ENCODE measurements at regions of chr5 and their contacts with region 1.

Region 1: GRCh38 chr5:81301271-81302015 is at the start of gene ZCCHC9:
- DNase-seq: peak; percentile 79
- ATAC-seq: peak; percentile 92
- H3K4me3 ChIP-seq: peak within 1 kb of the TSS; percentile 76
- H3K27ac ChIP-seq: peak within 1 kb of the TSS; percentile 77
- H3K4me1 ChIP-seq: peaks cover 8% of the 10 kb centered on the region
- H3K27me3 ChIP-seq: no peaks in the 10 kb centered on the region
- CTCF ChIP-seq: peak; percentile 2 to 21 (median 12); a peak in 1 of 6 replicates
- EP300 ChIP-seq: peak; percentile 48 to 52; a peak in 2 of 4 replicates
- POLR2A ChIP-seq: peak; percentile 98
- RAD21 ChIP-seq: no peak; the same call in 1 of the 2 replicates
- polyA plus RNA-seq, gene ZCCHC9: 47.5 to 57.7 TPM

Region 2: GRCh38 chr5:80686757-80687156 is 614.7 kb before region 1 on chr5:
- CTCF ChIA-PET with region 1: interaction called, 11 read pairs
- POLR2A ChIA-PET with region 1: no interaction called
- RAD21 ChIA-PET with region 1: no interaction called
- SMC1A ChIA-PET with region 1: no interaction called
- in situ Hi-C with region 1: no loop called
- intact Hi-C with region 1: loop called (anchors 5 kb)
- DNase-seq: no peak
- ATAC-seq: no peak
- H3K4me3 ChIP-seq: no peak overlapping the region
- H3K27ac ChIP-seq: no peak overlapping the region
- H3K4me1 ChIP-seq: no peaks in the 10 kb centered on the region
- H3K27me3 ChIP-seq: no peaks in the 10 kb centered on the region
- CTCF ChIP-seq: no peak; a peak in 1 of 6 replicates
- EP300 ChIP-seq: no peak
- POLR2A ChIP-seq: no peak
- RAD21 ChIP-seq: peak; percentile 40

Region 3: GRCh38 chr5:81070571-81071255 is 230.7 kb before region 1 on chr5:
- CTCF ChIA-PET with region 1: no interaction called
- POLR2A ChIA-PET with region 1: no interaction called
- RAD21 ChIA-PET with region 1: no interaction called
- SMC1A ChIA-PET with region 1: no interaction called
- in situ Hi-C with region 1: no loop called
- intact Hi-C with region 1: no loop called
- DNase-seq: no peak
- ATAC-seq: no peak
- H3K4me3 ChIP-seq: no peak overlapping the region
- H3K27ac ChIP-seq: no peak overlapping the region
- H3K4me1 ChIP-seq: no peaks in the 10 kb centered on the region
- H3K27me3 ChIP-seq: no peaks in the 10 kb centered on the region
- CTCF ChIP-seq: no peak
- EP300 ChIP-seq: no peak
- POLR2A ChIP-seq: no peak
- RAD21 ChIP-seq: no peak

Region 4: GRCh38 chr5:81207009-81207408 is 94.4 kb before region 1 on chr5:
- CTCF ChIA-PET with region 1: interaction called, 31 read pairs
- POLR2A ChIA-PET with region 1: interaction called, 4 read pairs
- RAD21 ChIA-PET with region 1: interaction called, 6 read pairs
- SMC1A ChIA-PET with region 1: interaction called, 11 read pairs
- in situ Hi-C with region 1: no loop called
- intact Hi-C with region 1: no loop called
- DNase-seq: no peak
- ATAC-seq: peak; percentile 53
- H3K4me3 ChIP-seq: no peak overlapping the region
- H3K27ac ChIP-seq: no peak overlapping the region
- H3K4me1 ChIP-seq: no peaks in the 10 kb centered on the region
- H3K27me3 ChIP-seq: no peaks in the 10 kb centered on the region
- CTCF ChIP-seq: peak; percentile 31 to 44 (median 38)
- EP300 ChIP-seq: no peak
- POLR2A ChIP-seq: no peak
- RAD21 ChIP-seq: peak; percentile 13; the same call in 1 of the 2 replicates

Region 5: GRCh38 chr5:81232464-81233079 is 68.9 kb before region 1 on chr5:
- CTCF ChIA-PET with region 1: interaction called, 11 read pairs
- POLR2A ChIA-PET with region 1: no interaction called
- RAD21 ChIA-PET with region 1: no interaction called
- SMC1A ChIA-PET with region 1: no interaction called
- in situ Hi-C with region 1: no loop called
- intact Hi-C with region 1: no loop called
- DNase-seq: no peak
- ATAC-seq: no peak
- H3K4me3 ChIP-seq: no peak overlapping the region
- H3K27ac ChIP-seq: no peak overlapping the region
- H3K4me1 ChIP-seq: no peaks in the 10 kb centered on the region
- H3K27me3 ChIP-seq: no peaks in the 10 kb centered on the region
- CTCF ChIP-seq: no peak
- EP300 ChIP-seq: no peak
- POLR2A ChIP-seq: no peak
- RAD21 ChIP-seq: no peak

Region 6: GRCh38 chr5:81288021-81288433 is 13.4 kb before region 1 on chr5:
- CTCF ChIA-PET with region 1: interaction called, 23 read pairs
- POLR2A ChIA-PET with region 1: no interaction called
- RAD21 ChIA-PET with region 1: interaction called, 3 read pairs
- SMC1A ChIA-PET with region 1: interaction called, 22 read pairs
- in situ Hi-C with region 1: no loop called
- intact Hi-C with region 1: no loop called
- DNase-seq: no peak
- ATAC-seq: peak; percentile 66
- H3K4me3 ChIP-seq: no peak overlapping the region
- H3K27ac ChIP-seq: peak overlapping the region; percentile 21; the same call in 1 of the 2 replicates
- H3K4me1 ChIP-seq: peaks cover 12% of the 10 kb centered on the region
- H3K27me3 ChIP-seq: no peaks in the 10 kb centered on the region
- CTCF ChIP-seq: no peak
- EP300 ChIP-seq: no peak
- POLR2A ChIP-seq: no peak
- RAD21 ChIP-seq: no peak

Measured in GM12878 (cell line).